Activated naive CD4-positive, alpha-beta T cell treated with anti-CD3 and anti-CD28 coated beads for 36 hours (primary cell): ENCODE measurements at regions of chr5 and their contacts with region 1.

Region 1: GRCh38 chr5:134225618-134226440 is at the start of gene PPP2CA:
- DNase-seq: peak; percentile 99
- H3K4me3 Mint-ChIP-seq: peak within 1 kb of the TSS; percentile 96
- H3K27ac Mint-ChIP-seq: peak within 1 kb of the TSS; percentile 96
- H3K4me1 Mint-ChIP-seq: peaks cover 52% of the 10 kb centered on the region
- H3K27me3 Mint-ChIP-seq: no peaks in the 10 kb centered on the region
- total RNA-seq, gene PPP2CA: 132 to 135 TPM

Region 2: DNA sequence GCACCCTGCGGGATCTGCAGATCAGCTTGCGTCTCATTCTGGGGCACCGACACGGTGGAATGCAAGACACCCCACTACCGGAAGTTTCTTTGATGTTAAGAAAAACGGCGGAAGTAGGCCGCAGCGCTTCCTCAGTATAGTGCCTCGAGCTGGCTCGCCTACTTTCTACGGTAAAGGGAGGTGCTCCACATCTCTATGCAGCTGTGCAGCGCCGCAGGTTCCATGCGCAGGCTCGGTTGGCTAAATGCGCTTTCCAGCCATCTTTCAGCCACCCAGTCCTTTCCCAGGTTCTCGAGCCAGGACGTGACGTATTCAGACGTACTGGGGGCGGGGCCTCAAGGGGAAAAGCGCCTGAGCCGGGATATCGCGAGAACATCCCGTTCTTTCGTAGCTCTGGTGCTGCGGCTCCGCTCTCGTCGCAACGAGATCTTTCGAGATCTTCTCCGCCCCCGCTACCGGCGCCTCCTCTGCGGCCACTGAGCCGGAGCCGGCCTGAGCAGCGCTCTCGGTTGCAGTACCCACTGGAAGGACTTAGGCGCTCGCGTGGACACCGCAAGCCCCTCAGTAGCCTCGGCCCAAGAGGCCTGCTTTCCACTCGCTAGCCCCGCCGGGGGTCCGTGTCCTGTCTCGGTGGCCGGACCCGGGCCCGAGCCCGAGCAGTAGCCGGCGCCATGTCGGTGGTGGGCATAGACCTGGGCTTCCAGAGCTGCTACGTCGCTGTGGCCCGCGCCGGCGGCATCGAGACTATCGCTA is 1174.1 kb before region 1 on chr5 and contains the start of gene HSPA4:
- CTCF ChIA-PET with region 1: no interaction called
- intact Hi-C with region 1: loop called (anchors 2 kb)
- DNase-seq: peak; percentile 99
- H3K4me3 Mint-ChIP-seq: peak within 1 kb of the TSS; percentile 98
- H3K27ac Mint-ChIP-seq: peak within 1 kb of the TSS; percentile 99
- H3K4me1 Mint-ChIP-seq: peaks cover 42% of the 10 kb centered on the region
- H3K27me3 Mint-ChIP-seq: no peaks in the 10 kb centered on the region
- total RNA-seq, gene HSPA4: 180 to 190 TPM

Region 3: DNA sequence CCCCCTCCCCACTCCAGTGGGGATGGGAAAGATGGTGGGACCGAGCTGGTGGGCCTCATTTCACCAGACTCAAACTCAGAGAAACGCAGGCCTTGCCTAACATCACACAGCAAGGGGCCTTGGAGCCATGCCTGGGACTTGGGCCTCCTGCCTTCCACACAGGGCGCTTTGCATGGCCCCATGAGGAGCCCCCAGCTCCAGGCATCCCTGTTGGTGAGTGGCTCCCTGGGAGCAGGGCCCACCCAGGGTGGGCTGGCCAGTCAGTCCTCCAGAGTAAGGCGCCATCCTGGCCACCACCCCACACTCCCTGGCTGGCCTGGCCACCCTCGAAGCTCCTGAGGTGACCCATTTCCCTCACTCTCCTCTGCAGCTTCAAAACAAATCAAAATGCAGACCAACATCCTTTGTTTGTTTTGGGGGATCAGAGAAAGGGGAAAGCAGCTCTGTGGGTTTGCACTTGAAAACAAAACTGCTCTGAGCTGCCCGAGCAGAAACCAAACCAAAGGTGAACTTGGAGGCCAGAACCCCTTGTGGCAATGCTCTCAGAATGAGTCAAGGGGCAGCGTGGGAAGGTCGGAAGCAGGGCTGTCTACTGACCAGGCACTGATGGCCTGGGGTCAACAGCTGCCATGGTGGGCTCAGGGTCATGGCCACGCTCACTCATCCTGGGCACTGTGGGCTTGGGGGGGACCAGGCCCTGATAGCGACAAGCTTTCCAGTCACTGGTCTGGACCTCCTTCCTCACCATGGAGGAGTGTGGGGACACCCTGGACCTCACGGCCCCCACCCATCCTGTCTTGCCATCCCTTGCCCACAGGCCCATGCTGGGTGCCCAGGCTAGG is 184.0 kb before region 1 on chr5:
- CTCF ChIA-PET with region 1: interaction called, 3 read pairs
- intact Hi-C with region 1: loop called (anchors 1 kb)
- DNase-seq: no peak
- H3K4me3 Mint-ChIP-seq: no peak overlapping the region
- H3K27ac Mint-ChIP-seq: no peak overlapping the region
- H3K4me1 Mint-ChIP-seq: peaks cover 51% of the 10 kb centered on the region
- H3K27me3 Mint-ChIP-seq: no peaks in the 10 kb centered on the region

Region 4: GRCh38 chr5:134411546-134412266 is 185.9 kb after region 1 on chr5 and contains the start of gene CDKN2AIPNL:
- CTCF ChIA-PET with region 1: interaction called, 7 read pairs
- intact Hi-C with region 1: loop called (anchors 2 kb)
- DNase-seq: peak; percentile 94
- H3K4me3 Mint-ChIP-seq: peak within 1 kb of the TSS; percentile 96
- H3K27ac Mint-ChIP-seq: peak within 1 kb of the TSS; percentile 88
- H3K4me1 Mint-ChIP-seq: peaks cover 34% of the 10 kb centered on the region
- H3K27me3 Mint-ChIP-seq: no peaks in the 10 kb centered on the region
- total RNA-seq, gene CDKN2AIPNL: 31.1 to 31.5 TPM

Region 5: GRCh38 chr5:134648425-134649162 is 422.8 kb after region 1 on chr5 and contains the start of gene SEC24A:
- CTCF ChIA-PET with region 1: no interaction called
- intact Hi-C with region 1: loop called (anchors 1 kb)
- DNase-seq: peak; percentile 92
- H3K4me3 Mint-ChIP-seq: peak within 1 kb of the TSS; percentile 89
- H3K27ac Mint-ChIP-seq: peak within 1 kb of the TSS; percentile 100
- H3K4me1 Mint-ChIP-seq: peaks cover 35% of the 10 kb centered on the region
- H3K27me3 Mint-ChIP-seq: no peaks in the 10 kb centered on the region
- total RNA-seq, gene SEC24A: 16.6 to 18.5 TPM

Region 6: DNA sequence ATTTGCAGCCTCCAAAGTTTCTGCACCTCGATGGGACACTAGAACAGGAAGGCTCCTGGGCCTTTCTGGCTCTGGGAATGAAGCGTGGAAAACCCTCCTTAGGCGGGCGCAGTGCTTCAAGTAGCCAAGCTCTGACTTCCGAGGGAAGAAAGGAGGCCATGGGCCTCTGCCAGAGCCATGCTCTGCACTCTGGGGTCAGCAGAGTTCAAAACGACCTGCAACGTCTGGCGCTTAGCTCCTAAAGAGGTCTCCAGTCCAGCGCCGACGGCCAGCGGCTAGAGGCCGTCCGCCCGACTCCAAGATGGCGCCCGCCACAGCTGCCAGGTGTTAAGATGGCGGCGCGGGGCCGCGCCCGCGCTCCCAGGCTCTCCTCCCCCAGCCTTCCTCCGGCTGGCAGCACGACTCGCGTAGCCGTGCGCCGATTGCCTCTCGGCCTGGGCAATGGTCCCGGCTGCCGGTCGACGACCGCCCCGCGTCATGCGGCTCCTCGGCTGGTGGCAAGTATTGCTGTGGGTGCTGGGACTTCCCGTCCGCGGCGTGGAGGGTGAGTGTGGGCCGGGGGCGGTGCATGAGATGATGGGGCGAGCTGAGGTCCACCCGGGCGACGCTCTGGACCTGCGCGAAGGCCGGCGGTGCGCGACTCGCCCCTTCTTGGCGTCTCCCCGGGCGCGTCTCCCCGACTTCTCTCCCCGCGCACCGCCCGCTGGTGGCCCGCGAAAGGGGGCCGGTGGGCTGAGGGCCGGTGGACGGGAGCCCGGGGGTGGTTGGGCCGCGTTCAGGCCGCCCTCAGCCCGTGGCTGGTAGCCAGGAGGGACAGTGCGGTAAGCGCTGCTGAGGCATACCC is 648.4 kb after region 1 on chr5 and contains the start of gene TXNDC15:
- CTCF ChIA-PET with region 1: no interaction called
- intact Hi-C with region 1: loop called (anchors 2 kb)
- DNase-seq: peak; percentile 84
- H3K4me3 Mint-ChIP-seq: peak within 1 kb of the TSS; percentile 89
- H3K27ac Mint-ChIP-seq: peak within 1 kb of the TSS; percentile 92
- H3K4me1 Mint-ChIP-seq: peaks cover 30% of the 10 kb centered on the region
- H3K27me3 Mint-ChIP-seq: no peaks in the 10 kb centered on the region
- total RNA-seq, gene TXNDC15: 19.8 to 20.9 TPM